ENCODE measurements at regions of chr6 and their contacts with region 1.

Region 1: DNA sequence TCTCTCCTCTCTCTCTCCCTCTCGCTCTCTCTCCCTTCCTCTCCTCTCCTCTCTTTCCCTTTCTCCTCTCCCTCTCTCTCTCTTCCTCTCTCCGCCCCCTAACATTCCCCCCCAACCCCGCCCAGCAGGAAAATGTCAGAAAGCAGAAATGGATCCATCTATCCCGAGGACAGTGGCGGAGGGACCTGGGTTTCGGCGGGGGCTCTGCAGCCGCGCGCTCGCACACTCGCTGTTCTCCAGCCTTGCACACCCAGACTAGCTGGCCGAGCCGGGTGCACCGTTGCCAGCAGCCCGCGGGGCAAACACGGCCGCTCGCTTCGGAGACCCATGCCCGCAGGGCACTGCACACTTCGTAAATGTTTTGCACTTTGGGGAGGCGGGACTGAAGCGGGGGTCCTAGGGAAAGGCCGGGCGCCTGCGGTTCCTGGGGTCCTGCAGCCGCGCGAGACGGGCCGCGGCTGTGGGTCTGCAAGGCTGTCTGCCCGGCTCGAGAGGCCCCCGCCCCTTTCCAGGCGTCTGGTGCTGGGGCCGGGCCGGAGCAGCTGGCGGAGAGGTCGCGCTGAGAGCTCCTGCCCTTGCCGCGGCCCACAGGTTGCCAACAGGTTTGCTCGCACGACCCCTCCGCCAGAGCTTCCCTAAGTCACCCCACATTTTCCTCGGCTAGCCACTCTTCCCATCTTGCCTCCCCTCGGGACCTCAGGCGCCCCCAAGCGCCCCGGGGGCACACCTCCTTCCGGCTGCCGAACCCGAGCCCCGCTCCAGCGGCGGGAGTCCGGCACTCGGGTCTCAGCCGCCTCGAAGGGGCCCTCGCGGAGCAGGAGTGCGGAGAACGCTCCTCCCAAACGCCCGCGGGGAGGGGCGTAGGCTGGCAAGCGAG is 816 bp upstream of the MDGA1 start:
- DNase-seq: peak; percentile 69
- H3K4me3 ChIP-seq: peak overlapping the region; percentile 63
- H3K27ac ChIP-seq: no peak overlapping the region
- H3K4me1 ChIP-seq: peaks cover 13% of the 10 kb centered on the region
- H3K27me3 ChIP-seq: peaks cover 45% of the 10 kb centered on the region
- CTCF ChIP-seq: no peak; the same call in 1 of the 2 replicates

Region 2: DNA sequence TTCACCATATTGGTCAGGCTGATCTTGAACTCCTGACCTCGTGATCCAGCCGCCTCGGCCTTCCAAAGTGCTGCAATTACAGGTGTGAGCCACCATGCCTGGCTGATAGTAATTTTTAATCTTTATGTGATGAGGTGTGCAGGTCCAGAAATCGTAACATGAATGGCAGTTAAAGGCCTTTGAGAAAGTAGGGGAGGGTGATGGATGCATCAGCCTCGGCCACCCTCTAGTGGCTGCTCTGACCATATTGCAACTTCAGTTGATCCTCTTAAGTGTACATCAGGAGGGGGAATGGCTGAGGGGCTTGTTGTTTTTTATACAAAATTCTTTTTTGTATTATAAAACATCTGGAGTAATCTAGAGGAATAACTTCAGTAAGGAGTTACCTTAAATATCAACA is 314.1 kb after region 1 on chr6:
- CTCF ChIA-PET with region 1: no interaction called
- POLR2A ChIA-PET with region 1: no interaction called
- intact Hi-C with region 1: loop called (anchors 5 kb)
- DNase-seq: peak; percentile 60
- H3K4me3 ChIP-seq: no peak overlapping the region
- H3K27ac ChIP-seq: no peak overlapping the region
- H3K4me1 ChIP-seq: no peaks in the 10 kb centered on the region
- H3K27me3 ChIP-seq: no peaks in the 10 kb centered on the region
- CTCF ChIP-seq: peak; percentile 83

Region 3: GRCh38 chr6:38493931-38494547 is 795.5 kb after region 1 on chr6:
- CTCF ChIA-PET with region 1: no interaction called
- POLR2A ChIA-PET with region 1: no interaction called
- intact Hi-C with region 1: loop called (anchors 5 kb)
- DNase-seq: peak; percentile 69
- H3K4me3 ChIP-seq: no peak overlapping the region
- H3K27ac ChIP-seq: no peak overlapping the region
- H3K4me1 ChIP-seq: no peaks in the 10 kb centered on the region
- H3K27me3 ChIP-seq: no peaks in the 10 kb centered on the region
- CTCF ChIP-seq: peak; percentile 90

Region 4: GRCh38 chr6:39062014-39062740 is 1363.7 kb after region 1 on chr6:
- CTCF ChIA-PET with region 1: no interaction called
- POLR2A ChIA-PET with region 1: no interaction called
- intact Hi-C with region 1: no loop called
- DNase-seq: peak; percentile 47
- H3K4me3 ChIP-seq: no peak overlapping the region
- H3K27ac ChIP-seq: no peak overlapping the region
- H3K4me1 ChIP-seq: no peaks in the 10 kb centered on the region
- H3K27me3 ChIP-seq: peaks cover 16% of the 10 kb centered on the region
- CTCF ChIP-seq: no peak